Activated B cell treated with CpG ODN at 0.5 μM for 24 hours (primary cell): ENCODE measurements at regions of chr9 and their contacts with region 1.

Region 1: GRCh38 chr9:124800306-124801259 is 23.6 kb downstream of the OLFML2A start:
- DNase-seq: peak; percentile 30
- ATAC-seq: peak; percentile 95
- H3K4me3 Mint-ChIP-seq: peak overlapping the region; percentile 64
- H3K27ac Mint-ChIP-seq: peak overlapping the region; percentile 94
- H3K4me1 Mint-ChIP-seq: peaks cover 40% of the 10 kb centered on the region
- H3K27me3 Mint-ChIP-seq: no peaks in the 10 kb centered on the region
- CTCF ChIP-seq: no peak

Region 2: DNA sequence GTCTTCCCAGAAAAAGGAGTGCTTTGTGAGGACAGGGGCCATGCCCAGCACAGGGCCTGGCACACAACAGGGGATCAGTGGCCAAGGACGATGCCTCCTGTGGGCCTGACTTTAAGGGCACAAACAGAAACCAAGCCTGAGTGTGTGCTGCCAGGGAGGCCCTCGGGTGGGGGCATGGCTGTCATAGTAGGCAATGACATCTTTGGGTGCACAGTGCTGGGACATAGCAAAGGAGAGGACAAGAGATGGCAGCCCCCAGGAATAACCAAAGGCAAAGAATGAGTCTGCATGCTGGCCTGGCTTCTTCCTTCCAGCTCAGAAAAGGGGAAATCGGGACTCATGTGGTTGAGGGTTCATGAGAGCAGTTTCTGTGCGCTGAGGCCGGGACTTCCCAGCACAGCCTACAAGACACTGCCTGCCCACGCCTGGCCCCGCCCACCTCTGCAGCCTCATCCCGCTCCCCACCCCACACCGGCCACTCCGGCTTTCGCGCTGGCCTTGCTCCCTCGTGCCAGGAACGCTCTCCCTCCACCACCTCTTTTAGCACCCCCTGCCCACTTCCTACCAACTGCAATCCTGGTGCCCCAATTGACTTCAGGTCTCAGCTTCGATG is 802.8 kb before region 1 on chr9:
- CTCF ChIA-PET with region 1: no interaction called
- POLR2A ChIA-PET with region 1: no interaction called
- intact Hi-C with region 1: no loop called
- DNase-seq: peak; percentile 40
- ATAC-seq: peak; percentile 72
- H3K4me3 Mint-ChIP-seq: peak overlapping the region; percentile 89
- H3K27ac Mint-ChIP-seq: peak overlapping the region; percentile 72
- H3K4me1 Mint-ChIP-seq: peaks cover 40% of the 10 kb centered on the region
- H3K27me3 Mint-ChIP-seq: peaks cover 56% of the 10 kb centered on the region
- CTCF ChIP-seq: no peak

Region 3: GRCh38 chr9:124764774-124765438 is 35.7 kb before region 1 on chr9:
- CTCF ChIA-PET with region 1: no interaction called
- POLR2A ChIA-PET with region 1: no interaction called
- intact Hi-C with region 1: no loop called
- DNase-seq: no peak
- ATAC-seq: no peak
- H3K4me3 Mint-ChIP-seq: no peak overlapping the region
- H3K27ac Mint-ChIP-seq: no peak overlapping the region
- H3K4me1 Mint-ChIP-seq: peaks cover 19% of the 10 kb centered on the region
- H3K27me3 Mint-ChIP-seq: peaks cover 36% of the 10 kb centered on the region
- CTCF ChIP-seq: no peak

Region 4: DNA sequence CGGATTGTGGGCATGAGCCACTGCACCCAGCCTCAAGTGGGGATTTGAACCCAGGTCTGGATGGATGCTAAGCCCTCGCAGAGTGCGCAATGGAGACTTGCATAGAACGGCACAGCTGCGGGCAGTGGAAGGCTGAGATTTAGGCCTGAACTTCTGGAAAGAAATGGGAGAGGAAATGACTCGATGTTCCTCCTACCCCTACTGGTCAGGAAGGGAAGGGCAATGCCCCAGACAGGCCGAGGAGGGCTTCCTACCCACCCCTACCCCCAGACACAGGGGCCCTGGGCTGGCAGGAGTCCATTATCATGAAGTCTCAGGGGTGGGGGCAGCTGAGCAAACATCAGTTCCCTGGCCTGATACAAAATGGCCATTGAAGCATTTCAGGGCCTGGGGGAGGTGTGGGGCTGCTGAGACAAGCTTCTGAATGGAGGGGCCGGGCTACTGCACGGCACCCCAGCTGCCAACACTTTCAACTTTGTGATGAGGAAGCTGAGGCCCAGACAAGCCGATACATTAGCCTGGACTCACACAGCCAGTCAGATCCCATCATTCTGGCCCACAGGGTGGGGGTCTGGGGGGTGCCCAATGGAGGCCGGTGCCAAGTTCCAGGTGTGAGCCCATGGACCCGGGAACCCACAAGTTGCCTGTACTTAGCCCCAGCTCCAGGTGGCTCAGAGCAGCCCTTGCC is 39.2 kb after region 1 on chr9:
- CTCF ChIA-PET with region 1: interaction called, 3 read pairs
- POLR2A ChIA-PET with region 1: no interaction called
- intact Hi-C with region 1: loop called (anchors 5 kb)
- DNase-seq: no peak
- ATAC-seq: peak; percentile 31
- H3K4me3 Mint-ChIP-seq: no peak overlapping the region
- H3K27ac Mint-ChIP-seq: no peak overlapping the region
- H3K4me1 Mint-ChIP-seq: no peaks in the 10 kb centered on the region
- H3K27me3 Mint-ChIP-seq: peaks cover 13% of the 10 kb centered on the region
- CTCF ChIP-seq: no peak